ENCODE measurements at regions of chr11 and their contacts with region 1.

Region 1: GRCh38 chr11:116124922-116125714 is 620.9 kb upstream of the CADM1 start:
- DNase-seq: no peak
- H3K4me3 ChIP-seq: no peak overlapping the region
- H3K27ac ChIP-seq: no peak overlapping the region
- H3K4me1 ChIP-seq: no peaks in the 10 kb centered on the region
- H3K27me3 ChIP-seq: no peaks in the 10 kb centered on the region
- CTCF ChIP-seq: no peak
- POLR2A ChIP-seq: no peak

Region 2: DNA sequence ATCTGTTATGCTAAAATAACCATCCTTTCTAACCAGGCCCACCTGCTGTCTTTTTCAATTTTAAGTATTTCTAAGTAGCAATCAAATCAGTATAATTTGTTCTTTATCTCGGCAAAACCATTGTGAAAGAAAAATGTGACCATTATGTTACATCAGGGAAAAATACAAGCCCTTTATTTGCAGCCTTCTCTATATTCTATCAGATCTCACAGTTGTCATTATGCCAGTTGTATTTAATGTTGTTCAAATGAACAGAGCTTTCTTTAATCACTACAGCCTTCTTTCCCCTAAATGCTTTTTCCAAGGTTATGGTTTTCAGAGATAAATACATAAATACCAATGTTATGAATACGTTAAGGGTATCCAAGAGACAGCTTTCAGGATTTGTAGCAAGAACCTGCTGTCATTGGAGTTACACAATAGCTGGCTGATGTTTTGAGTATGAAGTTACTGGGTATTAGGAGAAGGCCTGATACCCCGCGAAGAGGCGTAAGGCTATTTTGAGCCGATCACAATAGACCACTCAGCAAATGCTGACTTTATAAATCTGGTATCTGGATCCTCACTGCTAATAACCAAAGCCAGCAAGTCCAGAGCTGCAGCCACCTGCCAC is 1027.2 kb before region 1 on chr11:
- intact Hi-C with region 1: loop called (anchors 5 kb)
- DNase-seq: no peak
- H3K4me3 ChIP-seq: no peak overlapping the region
- H3K27ac ChIP-seq: no peak overlapping the region
- H3K4me1 ChIP-seq: no peaks in the 10 kb centered on the region
- H3K27me3 ChIP-seq: no peaks in the 10 kb centered on the region
- CTCF ChIP-seq: no peak
- POLR2A ChIP-seq: no peak

Region 3: DNA sequence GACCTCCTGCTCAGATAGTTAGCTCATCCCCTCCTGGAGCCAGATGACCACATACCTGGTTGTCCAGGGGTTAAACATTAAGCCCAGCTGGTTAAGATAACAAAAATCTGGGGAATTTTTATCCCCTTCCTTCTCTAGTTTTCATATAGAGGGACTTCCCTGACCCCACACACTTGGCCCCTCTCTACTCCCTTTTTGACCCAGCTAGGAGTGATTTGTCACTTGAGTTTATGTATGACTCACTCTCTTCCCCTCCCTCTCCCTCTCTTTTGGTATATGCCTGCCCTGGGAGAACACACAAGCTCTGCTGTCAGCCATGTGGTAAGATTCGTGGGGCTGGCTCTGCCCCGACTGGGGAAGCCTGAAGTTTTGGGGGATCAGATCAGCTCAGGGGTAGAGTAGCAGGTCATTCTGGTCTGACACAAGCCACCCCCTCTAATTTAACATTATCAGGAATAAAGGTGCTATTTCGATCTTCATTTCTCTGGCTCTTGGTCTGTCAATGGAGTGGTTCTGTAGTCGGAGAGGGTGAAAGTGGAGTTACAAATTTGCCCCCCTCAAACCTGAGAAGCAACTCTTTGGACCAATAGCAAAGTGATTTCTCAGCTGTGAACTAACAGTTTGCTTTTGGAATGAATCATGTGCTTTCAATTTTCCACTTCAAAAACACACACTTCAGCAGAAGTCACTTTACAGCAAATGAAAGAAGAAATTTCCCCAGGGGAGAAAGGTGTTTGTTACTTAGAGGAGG is 205.6 kb before region 1 on chr11:
- intact Hi-C with region 1: no loop called
- DNase-seq: no peak
- H3K4me3 ChIP-seq: no peak overlapping the region
- H3K27ac ChIP-seq: no peak overlapping the region
- H3K4me1 ChIP-seq: no peaks in the 10 kb centered on the region
- H3K27me3 ChIP-seq: no peaks in the 10 kb centered on the region
- CTCF ChIP-seq: no peak
- POLR2A ChIP-seq: no peak

Measured in breast epithelium (tissue), 4 donors.